SK-N-SH (cell line): ENCODE measurements at regions of chr6 and their contacts with region 1.

Region 1: DNA sequence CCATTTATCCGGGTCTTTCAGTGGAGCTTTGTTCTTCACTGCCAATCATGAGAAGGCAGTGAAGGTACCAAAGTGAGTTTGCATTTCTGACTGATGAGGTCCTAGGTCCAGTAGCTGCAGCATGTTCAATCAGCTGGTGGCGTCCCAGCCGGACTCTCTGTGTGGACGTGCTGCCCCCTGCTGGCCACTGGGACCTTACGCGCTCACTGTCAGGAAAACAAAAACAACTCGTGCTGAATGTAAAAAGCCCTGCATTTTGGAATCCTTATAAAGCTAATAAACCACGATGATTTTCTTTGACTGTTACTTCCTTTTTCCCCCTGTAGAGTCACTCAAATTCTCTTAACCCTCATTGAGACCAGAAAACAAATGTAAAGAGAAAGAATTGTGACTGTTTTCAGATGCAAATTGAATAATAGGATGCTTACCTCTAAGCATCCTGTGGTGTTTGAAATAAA is 4.9 kb upstream of the CD24 start:
- DNase-seq: peak; percentile 82
- H3K4me3 ChIP-seq: peak overlapping the region in 1 of 2 experiments; percentile 24; a peak in 1 of 4 replicates
- H3K27ac ChIP-seq: no peak overlapping the region
- H3K4me1 ChIP-seq: no peaks in the 10 kb centered on the region; a peak in 1 of 4 replicates
- H3K27me3 ChIP-seq: peaks cover 30% of the 10 kb centered on the region; the same call in 1 of the 2 replicates
- CTCF ChIP-seq: peak; percentile 96
- EP300 ChIP-seq: no peak
- RAD21 ChIP-seq: peak; percentile 99

Region 2: GRCh38 chr6:106444777-106445507 is 534.5 kb before region 1 on chr6:
- CTCF ChIA-PET with region 1: interaction called, 30 read pairs
- POLR2A ChIA-PET with region 1: interaction called, 4 read pairs
- DNase-seq: peak; percentile 67
- H3K4me3 ChIP-seq: no peak overlapping the region
- H3K27ac ChIP-seq: no peak overlapping the region
- H3K4me1 ChIP-seq: no peaks in the 10 kb centered on the region
- H3K27me3 ChIP-seq: peaks cover 20% of the 10 kb centered on the region
- CTCF ChIP-seq: peak; percentile 82
- EP300 ChIP-seq: no peak
- RAD21 ChIP-seq: peak; percentile 81

Region 3: DNA sequence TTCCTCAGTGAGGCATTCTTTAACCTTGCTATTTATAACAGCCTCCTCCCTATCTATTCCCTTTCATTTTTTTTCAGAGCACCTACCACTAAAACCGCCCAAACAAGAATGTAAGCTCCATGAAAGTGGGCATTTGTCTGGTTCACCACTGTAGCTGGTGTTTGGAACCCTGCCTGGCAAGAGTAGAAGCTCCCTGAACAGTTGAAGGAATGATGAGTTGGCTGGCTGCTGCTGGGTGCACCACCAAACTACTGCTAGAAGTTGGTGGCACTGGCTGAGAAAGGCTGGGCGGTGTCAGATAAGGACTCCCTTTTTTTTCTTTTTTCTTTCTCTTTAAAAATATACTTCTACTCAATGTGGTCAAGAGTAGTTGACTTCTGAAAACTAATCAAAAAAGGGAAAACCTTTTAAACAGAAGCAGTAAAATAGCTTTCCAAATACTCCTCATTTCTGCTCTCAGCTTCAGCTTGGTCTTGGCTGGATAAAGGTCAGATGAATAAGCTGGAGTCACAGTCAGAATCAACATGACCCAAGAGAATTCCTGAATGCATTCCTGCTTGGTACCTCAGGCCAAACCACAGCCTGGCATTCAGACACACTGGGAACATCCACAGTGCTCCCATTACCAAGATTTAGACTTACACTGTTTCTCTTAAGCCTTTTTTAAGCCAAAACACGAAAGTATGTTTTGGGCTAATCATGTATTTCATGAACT is 388.2 kb before region 1 on chr6:
- CTCF ChIA-PET with region 1: interaction called, 16 read pairs
- POLR2A ChIA-PET with region 1: no interaction called
- DNase-seq: no peak
- H3K4me3 ChIP-seq: no peak overlapping the region
- H3K27ac ChIP-seq: peak overlapping the region; percentile 29 to 52; a peak in 3 of 4 replicates
- H3K4me1 ChIP-seq: no peaks in the 10 kb centered on the region
- H3K27me3 ChIP-seq: no peaks in the 10 kb centered on the region
- CTCF ChIP-seq: no peak
- EP300 ChIP-seq: no peak; a peak in 1 of 4 replicates
- RAD21 ChIP-seq: no peak

Region 4: GRCh38 chr6:106614592-106615301 is 364.7 kb before region 1 on chr6:
- CTCF ChIA-PET with region 1: interaction called, 90 read pairs
- POLR2A ChIA-PET with region 1: interaction called, 6 read pairs
- DNase-seq: no peak
- H3K4me3 ChIP-seq: no peak overlapping the region
- H3K27ac ChIP-seq: no peak overlapping the region
- H3K4me1 ChIP-seq: no peaks in the 10 kb centered on the region
- H3K27me3 ChIP-seq: no peaks in the 10 kb centered on the region
- CTCF ChIP-seq: no peak
- EP300 ChIP-seq: no peak
- RAD21 ChIP-seq: no peak

Region 5: DNA sequence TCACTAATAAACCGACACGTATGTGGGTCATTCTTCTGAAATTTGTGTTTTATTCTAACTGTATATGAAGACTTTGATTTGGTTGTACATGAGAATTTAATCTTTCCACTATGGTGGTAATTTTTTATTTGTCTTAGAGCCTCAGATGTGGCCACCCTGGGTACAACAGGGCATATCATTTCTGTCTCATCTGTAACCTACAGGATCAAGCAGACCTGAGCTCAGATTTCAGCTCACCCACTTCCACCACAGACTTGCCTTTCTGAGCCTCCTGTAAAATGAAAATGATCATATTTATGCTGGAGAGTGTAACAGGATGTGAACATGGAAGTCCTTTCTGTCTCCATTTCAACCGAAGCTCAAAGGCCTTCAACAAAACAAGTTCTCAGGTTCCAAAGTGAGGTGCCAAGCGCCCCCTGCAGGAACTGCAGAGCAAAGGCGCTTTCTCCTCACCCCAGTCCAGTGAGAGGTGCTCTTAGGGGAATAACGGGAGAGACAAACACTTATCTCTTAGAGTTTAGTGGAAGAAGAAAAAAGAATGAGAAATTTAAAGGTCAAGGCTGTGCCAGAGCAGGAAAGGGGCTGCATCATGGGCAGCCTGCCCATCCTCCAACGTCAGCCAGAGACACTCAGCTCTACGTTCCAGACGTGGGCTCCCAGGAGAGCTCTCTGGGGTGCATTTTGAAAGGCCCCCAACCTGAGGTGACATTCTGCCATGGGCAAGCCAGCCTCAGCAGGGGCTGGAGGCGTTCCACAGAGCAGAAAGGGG is 18.1 kb after region 1 on chr6:
- CTCF ChIA-PET with region 1: interaction called, 25 read pairs
- POLR2A ChIA-PET with region 1: no interaction called
- DNase-seq: peak; percentile 66
- H3K4me3 ChIP-seq: no peak overlapping the region; a peak in 1 of 4 replicates
- H3K27ac ChIP-seq: no peak overlapping the region
- H3K4me1 ChIP-seq: no peaks in the 10 kb centered on the region
- H3K27me3 ChIP-seq: no peaks in the 10 kb centered on the region
- CTCF ChIP-seq: peak; percentile 87
- EP300 ChIP-seq: no peak
- RAD21 ChIP-seq: peak; percentile 73